ENCODE measurements at regions of chr3 and their contacts with region 1.

Region 1: DNA sequence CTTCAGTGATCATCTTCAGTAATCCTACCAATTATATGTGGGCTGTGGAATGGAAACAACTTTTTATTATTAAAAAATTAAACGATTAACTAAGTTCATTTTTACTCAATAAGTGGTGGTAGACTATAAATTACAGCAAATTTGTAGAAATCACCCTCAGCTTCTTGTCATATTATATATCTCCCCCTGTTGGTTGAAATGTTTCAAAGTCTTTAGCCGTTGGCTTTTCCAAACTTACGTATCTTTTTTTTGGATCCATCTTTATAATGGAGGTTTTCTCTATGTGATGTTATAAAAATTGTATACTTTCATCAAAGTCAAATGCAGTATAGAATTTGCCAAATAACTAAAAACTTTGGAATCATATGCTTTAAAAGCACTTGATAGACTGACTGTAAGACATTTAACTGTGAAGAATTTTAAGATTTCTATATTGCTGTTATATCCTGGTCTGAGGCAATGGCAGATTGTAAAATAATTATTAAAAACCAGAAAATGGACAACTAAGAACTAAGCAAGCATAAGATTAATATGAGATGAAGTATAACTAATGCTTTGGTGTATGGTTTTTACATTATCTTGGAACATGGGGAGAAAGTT is 44.7 kb downstream of the ATP11B start:
- H3K4me3 ChIP-seq: no peak overlapping the region
- H3K27ac ChIP-seq: no peak overlapping the region
- H3K4me1 ChIP-seq: no peaks in the 10 kb centered on the region
- CTCF ChIP-seq: no peak

Region 2: GRCh38 chr3:182713743-182714517 is 124.0 kb before region 1 on chr3:
- CTCF ChIA-PET with region 1: interaction called, 16 read pairs
- POLR2A ChIA-PET with region 1: interaction called, 3 read pairs
- H3K4me3 ChIP-seq: no peak overlapping the region
- H3K27ac ChIP-seq: no peak overlapping the region
- H3K4me1 ChIP-seq: no peaks in the 10 kb centered on the region
- CTCF ChIP-seq: no peak

Region 3: GRCh38 chr3:183006396-183007002 is 168.5 kb after region 1 on chr3:
- CTCF ChIA-PET with region 1: no interaction called
- POLR2A ChIA-PET with region 1: no interaction called
- H3K4me3 ChIP-seq: no peak overlapping the region
- H3K27ac ChIP-seq: no peak overlapping the region
- H3K4me1 ChIP-seq: no peaks in the 10 kb centered on the region; the same call in 1 of the 2 replicates
- CTCF ChIP-seq: no peak

Measured in HEK293 (cell line).